Naive thymus-derived CD4-positive, alpha-beta T cell (primary cell): ENCODE measurements at regions of chr9 and their contacts with region 1.

Region 1: DNA sequence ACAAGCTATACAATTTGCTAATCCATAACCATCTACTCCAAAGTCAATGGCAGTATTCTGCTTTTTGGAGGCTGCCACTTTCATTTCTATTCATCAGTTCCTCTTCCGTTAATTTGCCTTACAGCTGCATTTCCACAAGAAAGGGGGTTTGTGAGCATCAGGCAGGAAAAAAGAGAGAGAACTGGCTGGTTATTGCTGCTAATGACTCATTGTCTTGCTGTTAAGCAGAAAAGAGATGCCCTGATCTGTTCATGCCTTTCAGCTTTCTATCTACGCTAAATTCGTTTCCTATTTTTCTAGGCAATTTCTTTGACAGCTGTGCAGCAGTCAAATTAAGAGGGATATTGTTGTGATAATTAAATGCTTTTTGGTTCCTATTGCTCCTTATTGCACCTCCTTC is 65.9 kb upstream of the GNAQ start:
- DNase-seq: no peak
- ATAC-seq: peak; percentile 70
- H3K4me3 ChIP-seq: no peak overlapping the region
- H3K4me3 Mint-ChIP-seq: peak overlapping the region in 8 of 10 donors; percentile 0 to 66 (median 36)
- H3K27ac ChIP-seq: no peak overlapping the region
- H3K27ac Mint-ChIP-seq: peak overlapping the region in 1 of 9 donors; percentile 32
- H3K4me1 ChIP-seq: peaks cover 0 to 7% of the 10 kb centered on the region in 2 donors
- H3K4me1 Mint-ChIP-seq: peaks cover 12 to 23% (median 19%) of the 10 kb centered on the region in 7 donors
- H3K27me3 ChIP-seq: no peaks in the 10 kb centered on the region
- H3K27me3 Mint-ChIP-seq: peaks cover 0 to 5% (median 0%) of the 10 kb centered on the region in 5 donors

Region 2: DNA sequence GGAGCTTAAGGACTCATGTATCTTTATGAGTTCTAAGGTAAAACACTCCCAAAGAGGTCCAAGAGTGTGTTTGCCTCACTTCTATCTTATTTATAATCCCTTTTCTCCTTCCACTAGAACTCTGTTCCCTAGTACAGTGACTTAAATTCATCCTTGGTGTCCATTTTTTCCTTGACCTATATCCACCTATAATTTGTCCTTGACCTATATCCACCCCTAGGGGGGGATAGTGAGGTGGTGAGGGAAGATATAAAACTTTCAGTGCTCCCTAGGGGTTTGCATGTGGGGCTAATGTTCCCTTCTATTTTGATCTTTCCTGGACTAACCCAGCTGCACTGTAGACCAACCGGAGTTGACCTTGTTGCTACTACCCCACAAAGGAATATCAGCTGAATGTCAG is 17.5 kb after region 1 on chr9:
- CTCF ChIA-PET with region 1: interaction called, 3 read pairs
- POLR2A ChIA-PET with region 1: interaction called, 3 read pairs
- intact Hi-C with region 1: loop called in 1 of 2 experiments (anchors 2 kb)
- DNase-seq: peak in 2 of 9 donors; percentile 11 to 18
- ATAC-seq: peak; percentile 43
- H3K4me3 ChIP-seq: no peak overlapping the region
- H3K4me3 Mint-ChIP-seq: no peak overlapping the region
- H3K27ac ChIP-seq: no peak overlapping the region
- H3K27ac Mint-ChIP-seq: no peak overlapping the region
- H3K4me1 ChIP-seq: peaks cover 17 to 21% of the 10 kb centered on the region in 2 donors
- H3K4me1 Mint-ChIP-seq: peaks cover 33 to 63% (median 41%) of the 10 kb centered on the region in 7 donors
- H3K27me3 ChIP-seq: no peaks in the 10 kb centered on the region
- H3K27me3 Mint-ChIP-seq: no peaks in the 10 kb centered on the region